ENCODE measurements at regions of chr1 and their contacts with region 1.

Region 1: GRCh38 chr1:9867408-9868243 is 42.4 kb downstream of the CTNNBIP1 start:
- DNase-seq: peak; percentile 88
- ATAC-seq: peak; percentile 96
- H3K4me3 ChIP-seq: no peak overlapping the region
- H3K4me3 Mint-ChIP-seq: no peak overlapping the region
- H3K27ac ChIP-seq: no peak overlapping the region
- H3K27ac Mint-ChIP-seq: no peak overlapping the region
- H3K4me1 ChIP-seq: peaks cover 0 to 8% of the 10 kb centered on the region in 2 donors
- H3K4me1 Mint-ChIP-seq: peaks cover 3% of the 10 kb centered on the region
- H3K27me3 ChIP-seq: no peaks in the 10 kb centered on the region
- H3K27me3 Mint-ChIP-seq: no peaks in the 10 kb centered on the region
- CTCF ChIP-seq: peak; percentile 96

Region 2: GRCh38 chr1:9078015-9078750 is 789.4 kb before region 1 on chr1:
- CTCF ChIA-PET with region 1: no interaction called
- POLR2A ChIA-PET with region 1: no interaction called
- intact Hi-C with region 1: no loop called
- DNase-seq: no peak
- ATAC-seq: peak; percentile 4
- H3K4me3 ChIP-seq: peak overlapping the region in 1 of 5 experiments; percentile 8
- H3K4me3 Mint-ChIP-seq: peak overlapping the region; percentile 70
- H3K27ac ChIP-seq: no peak overlapping the region
- H3K27ac Mint-ChIP-seq: peak overlapping the region; percentile 26
- H3K4me1 ChIP-seq: peaks cover 85 to 94% of the 10 kb centered on the region in 2 donors
- H3K4me1 Mint-ChIP-seq: peaks cover 80% of the 10 kb centered on the region
- H3K27me3 ChIP-seq: peaks cover 0 to 6% (median 3%) of the 10 kb centered on the region in 4 experiments
- H3K27me3 Mint-ChIP-seq: peaks cover 14% of the 10 kb centered on the region
- CTCF ChIP-seq: no peak

Region 3: DNA sequence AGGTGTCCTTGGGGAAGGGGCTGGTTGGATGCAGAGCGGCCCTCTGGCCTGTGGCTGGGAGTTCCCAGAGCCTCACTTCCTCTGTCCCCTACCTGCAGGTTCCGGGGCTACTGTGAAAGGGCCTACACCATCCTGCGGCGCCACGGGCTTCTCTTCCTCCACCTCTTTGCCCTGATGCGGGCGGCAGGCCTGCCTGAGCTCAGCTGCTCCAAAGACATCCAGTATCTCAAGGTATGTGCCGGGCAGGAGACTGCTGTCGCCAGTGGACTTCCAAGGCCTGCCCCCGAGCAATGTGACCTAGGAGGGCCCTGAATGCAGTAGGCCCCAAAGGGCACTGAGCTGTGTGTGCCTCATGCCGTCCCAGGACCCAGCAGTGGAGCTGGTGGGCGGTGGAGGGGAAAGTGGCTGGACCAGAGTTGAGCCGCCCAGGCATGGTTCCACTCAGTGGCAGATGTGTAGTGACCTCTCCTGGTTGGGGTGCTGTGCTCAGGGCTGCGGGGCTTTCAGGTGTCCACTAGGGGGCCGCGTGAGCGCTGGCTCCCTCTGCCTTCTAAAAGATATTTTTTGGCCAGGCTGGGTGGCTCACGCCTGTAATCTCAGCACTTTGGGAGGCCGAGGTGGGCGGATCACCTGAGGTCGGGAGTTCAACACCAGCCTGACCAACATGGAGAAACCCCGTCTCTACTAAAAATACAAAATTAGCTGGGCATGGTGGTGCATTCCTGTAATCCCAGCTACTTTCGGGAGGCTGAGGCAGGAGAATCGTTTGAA is 142.7 kb before region 1 on chr1:
- CTCF ChIA-PET with region 1: interaction called, 42 read pairs
- POLR2A ChIA-PET with region 1: no interaction called
- intact Hi-C with region 1: loop called (anchors 10 kb)
- DNase-seq: peak; percentile 79
- ATAC-seq: peak; percentile 77
- H3K4me3 ChIP-seq: no peak overlapping the region
- H3K4me3 Mint-ChIP-seq: no peak overlapping the region
- H3K27ac ChIP-seq: peak overlapping the region in 1 of 2 donors; percentile 18
- H3K27ac Mint-ChIP-seq: peak overlapping the region; percentile 77
- H3K4me1 ChIP-seq: peaks cover 8 to 26% of the 10 kb centered on the region in 2 donors
- H3K4me1 Mint-ChIP-seq: peaks cover 17% of the 10 kb centered on the region
- H3K27me3 ChIP-seq: no peaks in the 10 kb centered on the region
- H3K27me3 Mint-ChIP-seq: no peaks in the 10 kb centered on the region
- CTCF ChIP-seq: peak; percentile 88

Region 4: GRCh38 chr1:9798236-9799130 is 69.1 kb before region 1 on chr1:
- CTCF ChIA-PET with region 1: interaction called, 15 read pairs
- POLR2A ChIA-PET with region 1: interaction called, 3 read pairs
- intact Hi-C with region 1: no loop called
- DNase-seq: no peak
- ATAC-seq: no peak
- H3K4me3 ChIP-seq: no peak overlapping the region
- H3K4me3 Mint-ChIP-seq: no peak overlapping the region
- H3K27ac ChIP-seq: no peak overlapping the region
- H3K27ac Mint-ChIP-seq: no peak overlapping the region
- H3K4me1 ChIP-seq: peaks cover 8% of the 10 kb centered on the region in 2 donors
- H3K4me1 Mint-ChIP-seq: peaks cover 42% of the 10 kb centered on the region
- H3K27me3 ChIP-seq: no peaks in the 10 kb centered on the region
- H3K27me3 Mint-ChIP-seq: no peaks in the 10 kb centered on the region
- CTCF ChIP-seq: no peak

Region 5: DNA sequence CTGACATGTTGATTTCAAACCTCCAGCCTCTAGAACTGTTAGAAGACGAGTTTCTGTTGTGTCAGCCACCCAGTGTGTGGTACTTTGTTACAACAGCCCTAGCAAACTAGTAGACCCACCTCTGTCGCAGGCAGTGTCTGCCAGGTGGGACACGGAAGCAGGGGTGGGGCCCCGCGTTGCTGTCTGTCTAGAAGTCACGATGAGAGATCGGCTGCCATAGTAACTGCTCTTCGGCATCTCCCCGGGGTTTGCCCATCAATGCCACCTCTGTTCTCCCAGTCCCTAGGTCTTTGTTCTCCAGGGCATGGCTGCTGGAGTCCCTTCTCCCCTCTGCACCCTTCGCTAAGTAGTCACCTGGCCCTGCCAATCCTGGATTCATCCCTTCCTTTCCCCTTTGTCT is 28.7 kb before region 1 on chr1:
- CTCF ChIA-PET with region 1: no interaction called
- POLR2A ChIA-PET with region 1: no interaction called
- intact Hi-C with region 1: no loop called
- DNase-seq: no peak
- ATAC-seq: no peak
- H3K4me3 ChIP-seq: no peak overlapping the region
- H3K4me3 Mint-ChIP-seq: no peak overlapping the region
- H3K27ac ChIP-seq: no peak overlapping the region
- H3K27ac Mint-ChIP-seq: no peak overlapping the region
- H3K4me1 ChIP-seq: no peaks in the 10 kb centered on the region
- H3K4me1 Mint-ChIP-seq: no peaks in the 10 kb centered on the region
- H3K27me3 ChIP-seq: no peaks in the 10 kb centered on the region
- H3K27me3 Mint-ChIP-seq: no peaks in the 10 kb centered on the region
- CTCF ChIP-seq: no peak

Region 6: GRCh38 chr1:9852410-9853248 is 15.0 kb before region 1 on chr1:
- CTCF ChIA-PET with region 1: interaction called, 12 read pairs
- POLR2A ChIA-PET with region 1: no interaction called
- intact Hi-C with region 1: no loop called
- DNase-seq: no peak
- ATAC-seq: no peak
- H3K4me3 ChIP-seq: no peak overlapping the region
- H3K4me3 Mint-ChIP-seq: no peak overlapping the region
- H3K27ac ChIP-seq: no peak overlapping the region
- H3K27ac Mint-ChIP-seq: no peak overlapping the region
- H3K4me1 ChIP-seq: peaks cover 21 to 36% of the 10 kb centered on the region in 2 donors
- H3K4me1 Mint-ChIP-seq: peaks cover 26% of the 10 kb centered on the region
- H3K27me3 ChIP-seq: no peaks in the 10 kb centered on the region
- H3K27me3 Mint-ChIP-seq: no peaks in the 10 kb centered on the region
- CTCF ChIP-seq: no peak

Measured in B cell (primary cell).